Right cardiac atrium (tissue), 5 donors: ENCODE measurements at regions of chr3 and their contacts with region 1.

Region 1: DNA sequence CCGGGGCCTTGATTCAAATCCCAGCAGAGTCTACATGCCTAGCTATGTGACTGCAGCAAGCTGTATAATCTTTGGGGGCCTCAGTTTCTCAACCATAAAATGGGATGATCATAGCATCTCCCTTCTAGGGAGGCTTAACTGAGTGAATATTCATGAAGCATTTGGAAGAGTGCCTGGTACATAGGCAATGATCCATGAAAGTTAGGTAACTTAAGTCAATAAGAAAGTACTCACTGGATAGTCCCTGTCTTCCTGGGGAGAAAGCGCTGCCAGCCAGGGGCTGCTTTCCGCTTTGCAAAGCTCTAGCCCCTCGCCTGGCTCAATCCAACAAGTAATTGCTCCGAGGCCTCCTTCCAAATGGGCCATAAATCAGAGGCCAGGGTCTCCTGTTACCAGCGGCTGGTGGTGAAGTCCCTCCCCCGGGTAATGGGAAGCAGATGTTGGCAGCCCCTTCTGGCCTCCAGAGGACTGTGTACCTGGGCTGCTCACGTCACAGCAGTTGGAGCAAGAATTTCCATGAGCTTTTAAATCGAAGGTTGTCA is 521.9 kb upstream of the PROK2 start:
- DNase-seq: no peak
- ATAC-seq: no peak
- H3K4me3 ChIP-seq: no peak overlapping the region
- H3K27ac ChIP-seq: no peak overlapping the region
- H3K4me1 ChIP-seq: peaks cover 13% of the 10 kb centered on the region
- H3K27me3 ChIP-seq: no peaks in the 10 kb centered on the region

Region 2: DNA sequence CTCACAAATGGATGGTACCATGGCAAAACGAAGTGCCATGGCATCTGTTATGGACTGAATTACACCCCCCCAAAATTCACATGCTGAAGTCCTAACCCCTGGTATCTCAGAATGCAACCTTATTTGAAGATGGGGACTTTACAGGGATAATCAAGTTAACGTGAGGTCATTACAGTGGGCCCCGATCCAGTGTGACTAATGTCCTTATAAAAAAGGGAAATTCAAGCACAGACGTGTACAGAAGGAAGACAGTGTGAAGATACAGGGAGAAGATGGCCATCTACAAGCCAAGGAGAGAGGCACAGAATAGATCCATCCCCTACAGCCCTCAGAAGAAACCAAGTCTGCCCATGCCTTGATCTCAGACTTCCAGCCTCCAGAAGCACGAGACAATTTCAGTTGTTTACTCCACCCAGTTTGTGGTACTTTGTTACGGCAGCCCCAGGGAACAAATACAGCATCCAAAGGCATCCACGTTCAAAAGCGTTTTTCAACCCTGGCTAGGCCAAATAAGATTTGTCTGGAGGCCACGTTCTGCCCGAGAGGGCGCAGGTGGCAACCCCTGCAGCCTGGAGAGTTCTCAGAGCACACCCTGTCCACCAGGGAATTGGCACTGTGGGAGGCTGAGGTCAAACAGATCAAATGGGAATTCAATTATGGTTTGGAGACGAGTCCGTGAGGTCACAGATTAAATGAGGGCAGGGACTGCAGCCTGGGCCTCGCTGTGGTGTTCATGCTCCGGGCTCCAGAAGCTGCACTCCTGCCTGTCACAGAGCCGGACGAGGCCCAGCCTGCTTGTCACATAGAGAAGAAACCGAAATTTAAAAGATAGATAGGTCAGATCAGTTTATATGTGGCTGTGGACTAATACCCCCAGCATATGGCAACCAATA is 46.6 kb after region 1 on chr3:
- intact Hi-C with region 1: no loop called
- DNase-seq: no peak
- ATAC-seq: no peak
- H3K4me3 ChIP-seq: no peak overlapping the region
- H3K27ac ChIP-seq: no peak overlapping the region
- H3K4me1 ChIP-seq: no peaks in the 10 kb centered on the region
- H3K27me3 ChIP-seq: no peaks in the 10 kb centered on the region

Region 3: DNA sequence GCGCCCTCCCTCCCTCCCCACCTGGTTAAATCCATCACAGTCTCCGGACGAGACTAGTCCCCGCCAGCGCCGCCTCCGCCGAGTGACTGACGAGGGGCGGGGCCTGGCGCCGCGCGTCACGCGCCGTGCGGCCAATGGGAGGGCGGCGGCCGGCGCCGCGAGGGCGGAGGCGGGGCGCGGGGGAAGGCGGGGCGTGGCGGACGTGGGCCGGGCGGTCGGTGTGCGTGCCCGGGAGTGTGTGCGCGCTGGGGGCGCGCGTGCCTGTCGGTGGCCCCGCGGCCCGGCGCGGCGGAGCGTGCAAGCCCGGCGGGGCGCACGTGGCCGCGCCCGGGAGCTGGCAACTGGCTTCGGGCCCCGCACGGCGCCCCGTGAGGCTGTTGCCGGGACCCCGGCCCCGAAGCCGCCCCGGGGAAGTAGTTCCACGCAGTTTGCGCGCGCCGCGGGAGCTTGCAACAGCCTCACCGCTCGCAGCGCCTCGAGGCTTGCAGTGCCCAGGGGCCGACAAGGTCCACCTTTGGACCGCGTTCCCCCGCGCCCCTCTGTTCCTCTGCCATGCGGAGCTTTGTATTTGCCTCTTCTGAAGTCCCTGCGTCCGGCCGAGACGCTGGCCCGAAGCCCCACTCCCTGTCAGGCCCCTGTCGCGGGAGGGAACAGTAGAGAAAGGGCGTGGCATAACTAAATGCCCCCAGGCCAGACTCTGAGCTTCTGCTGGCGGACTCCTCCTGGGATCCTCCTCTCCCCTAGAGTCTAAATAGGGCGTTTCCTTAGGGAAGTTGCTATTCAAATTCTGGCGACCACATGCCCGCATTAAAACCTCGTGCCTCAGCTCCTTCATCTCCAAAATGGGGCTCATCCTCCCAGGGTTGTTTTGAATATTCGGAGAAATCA is 140.4 kb after region 1 on chr3:
- intact Hi-C with region 1: loop called in 1 of 4 experiments (anchors 10 kb)
- DNase-seq: peak; percentile 94 to 98 (median 97)
- ATAC-seq: peak; percentile 96 to 99
- H3K4me3 ChIP-seq: peak overlapping the region; percentile 78
- H3K27ac ChIP-seq: peak overlapping the region; percentile 69
- H3K4me1 ChIP-seq: no peaks in the 10 kb centered on the region
- H3K27me3 ChIP-seq: no peaks in the 10 kb centered on the region